Panc1 (cell line): ENCODE measurements at regions of chr11 and their contacts with region 1.

Region 1: DNA sequence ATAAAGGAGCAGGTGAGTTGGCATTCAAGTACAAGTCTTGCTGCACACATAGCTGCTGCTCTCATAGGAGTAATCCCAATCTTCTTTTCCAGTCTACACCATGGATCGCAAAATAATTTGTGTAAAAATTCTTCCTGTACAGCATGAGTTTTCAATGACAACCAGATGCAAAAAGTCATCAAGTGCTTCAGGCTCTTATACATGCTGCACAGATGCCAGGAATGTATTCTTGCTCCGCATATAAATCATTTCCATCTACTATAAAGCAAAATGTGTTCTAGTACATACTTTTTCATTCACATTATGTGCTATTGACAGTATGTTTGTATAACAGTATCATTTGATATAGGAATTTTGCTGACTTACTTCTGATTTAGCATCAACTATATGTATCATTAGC is 35.4 kb downstream of the NXPE2 start:
- DNase-seq: no peak
- ATAC-seq: no peak
- H3K4me3 ChIP-seq: no peak overlapping the region
- H3K27ac ChIP-seq: no peak overlapping the region
- H3K4me1 ChIP-seq: no peaks in the 10 kb centered on the region
- H3K27me3 ChIP-seq: no peaks in the 10 kb centered on the region
- CTCF ChIP-seq: no peak

Region 2: GRCh38 chr11:114386545-114386944 is 327.2 kb before region 1 on chr11:
- CTCF ChIA-PET with region 1: no interaction called
- POLR2A ChIA-PET with region 1: interaction called, 12 read pairs
- in situ Hi-C with region 1: no loop called
- intact Hi-C with region 1: no loop called
- DNase-seq: no peak
- ATAC-seq: no peak
- H3K4me3 ChIP-seq: no peak overlapping the region
- H3K27ac ChIP-seq: no peak overlapping the region
- H3K4me1 ChIP-seq: no peaks in the 10 kb centered on the region
- H3K27me3 ChIP-seq: no peaks in the 10 kb centered on the region
- CTCF ChIP-seq: no peak